CD4-positive, alpha-beta memory T cell (primary cell): ENCODE measurements at regions of chr17 and their contacts with region 1.

Region 1: DNA sequence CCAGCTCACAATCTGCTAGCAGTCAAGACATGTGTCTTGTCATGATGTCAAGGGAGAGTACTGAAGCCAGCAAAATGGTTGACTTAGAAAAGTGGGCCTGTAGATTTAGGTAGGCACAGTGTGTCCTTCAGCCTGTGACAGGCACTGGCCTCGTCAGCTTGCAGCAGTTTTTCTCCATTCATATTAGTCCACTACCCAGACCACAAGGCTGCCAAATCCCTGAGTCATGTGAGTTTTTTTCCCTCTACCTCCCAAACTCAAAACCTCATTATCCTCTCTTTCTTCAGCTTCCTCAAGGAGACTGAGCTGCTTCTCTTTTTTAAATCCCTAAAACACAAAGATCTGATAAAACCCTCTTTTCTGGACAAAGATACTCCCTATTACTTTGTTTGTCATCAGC is 102.6 kb upstream of the HS3ST3A1 start:
- DNase-seq: no peak
- H3K4me3 ChIP-seq: no peak overlapping the region
- H3K4me3 Mint-ChIP-seq: no peak overlapping the region
- H3K27ac ChIP-seq: no peak overlapping the region
- H3K27ac Mint-ChIP-seq: no peak overlapping the region
- H3K4me1 ChIP-seq: no peaks in the 10 kb centered on the region
- H3K4me1 Mint-ChIP-seq: peaks cover 0 to 2% (median 0%) of the 10 kb centered on the region in 4 donors
- H3K27me3 ChIP-seq: no peaks in the 10 kb centered on the region
- H3K27me3 Mint-ChIP-seq: peaks cover 1 to 8% of the 10 kb centered on the region in 2 donors

Region 2: GRCh38 chr17:13776027-13776588 is 71.8 kb after region 1 on chr17:
- CTCF ChIA-PET with region 1: no interaction called
- POLR2A ChIA-PET with region 1: no interaction called
- intact Hi-C with region 1: loop called (anchors 10 kb)
- DNase-seq: no peak
- H3K4me3 ChIP-seq: no peak overlapping the region
- H3K4me3 Mint-ChIP-seq: no peak overlapping the region
- H3K27ac ChIP-seq: no peak overlapping the region
- H3K27ac Mint-ChIP-seq: no peak overlapping the region
- H3K4me1 ChIP-seq: no peaks in the 10 kb centered on the region
- H3K4me1 Mint-ChIP-seq: no peaks in the 10 kb centered on the region
- H3K27me3 ChIP-seq: no peaks in the 10 kb centered on the region
- H3K27me3 Mint-ChIP-seq: no peaks in the 10 kb centered on the region

Region 3: GRCh38 chr17:14004927-14005620 is 300.7 kb after region 1 on chr17:
- CTCF ChIA-PET with region 1: no interaction called
- POLR2A ChIA-PET with region 1: no interaction called
- intact Hi-C with region 1: no loop called
- DNase-seq: no peak
- H3K4me3 ChIP-seq: no peak overlapping the region
- H3K4me3 Mint-ChIP-seq: no peak overlapping the region
- H3K27ac ChIP-seq: no peak overlapping the region
- H3K27ac Mint-ChIP-seq: peak overlapping the region in 1 of 7 donors; percentile 32
- H3K4me1 ChIP-seq: no peaks in the 10 kb centered on the region
- H3K4me1 Mint-ChIP-seq: peaks cover 0 to 6% (median 2%) of the 10 kb centered on the region in 4 donors
- H3K27me3 ChIP-seq: no peaks in the 10 kb centered on the region
- H3K27me3 Mint-ChIP-seq: no peaks in the 10 kb centered on the region